ENCODE measurements at regions of chr3 and their contacts with region 1.

Region 1: DNA sequence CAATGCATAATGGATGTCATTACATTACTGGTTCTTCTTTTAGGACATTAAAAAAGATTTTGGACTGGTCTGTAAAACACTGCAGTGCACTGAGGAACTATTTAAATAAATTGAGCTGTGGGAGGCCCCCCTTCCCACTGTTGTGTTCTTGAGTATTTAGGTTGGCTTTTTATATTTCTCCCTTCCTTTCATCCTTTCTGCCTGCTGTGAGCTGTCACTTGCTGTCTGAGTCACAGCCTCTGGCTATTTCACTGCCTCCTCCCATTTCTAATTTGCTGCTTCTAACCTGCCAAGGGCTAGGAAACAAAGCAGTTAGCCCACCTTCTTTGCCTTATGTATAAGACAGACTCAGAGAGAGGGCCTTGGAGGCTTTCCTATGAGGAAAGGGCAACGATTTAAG is 89.0 kb upstream of the FNDC3B start:
- DNase-seq: peak; percentile 35
- ATAC-seq: peak; percentile 42
- H3K4me3 ChIP-seq: no peak overlapping the region
- H3K27ac ChIP-seq: peak overlapping the region; percentile 33
- H3K4me1 ChIP-seq: peaks cover 72% of the 10 kb centered on the region
- H3K27me3 ChIP-seq: no peaks in the 10 kb centered on the region
- CTCF ChIP-seq: no peak
- EP300 ChIP-seq: no peak
- POLR2A ChIP-seq: no peak
- RAD21 ChIP-seq: no peak

Region 2: GRCh38 chr3:171846597-171846996 is 103.8 kb before region 1 on chr3:
- CTCF ChIA-PET with region 1: no interaction called
- POLR2A ChIA-PET with region 1: interaction called, 12 read pairs
- in situ Hi-C with region 1: no loop called
- intact Hi-C with region 1: loop called (anchors 10 kb)
- DNase-seq: no peak
- ATAC-seq: peak; percentile 34; the same call in 2 of the 3 replicates
- H3K4me3 ChIP-seq: no peak overlapping the region
- H3K27ac ChIP-seq: peak overlapping the region; percentile 100
- H3K4me1 ChIP-seq: peaks cover 88% of the 10 kb centered on the region
- H3K27me3 ChIP-seq: no peaks in the 10 kb centered on the region
- CTCF ChIP-seq: no peak
- EP300 ChIP-seq: 0 out of 4 replicates have a peak, but pooled peaks of 1 of the 2 experiments have one; percentile 6
- POLR2A ChIP-seq: no peak
- RAD21 ChIP-seq: no peak

Region 3: DNA sequence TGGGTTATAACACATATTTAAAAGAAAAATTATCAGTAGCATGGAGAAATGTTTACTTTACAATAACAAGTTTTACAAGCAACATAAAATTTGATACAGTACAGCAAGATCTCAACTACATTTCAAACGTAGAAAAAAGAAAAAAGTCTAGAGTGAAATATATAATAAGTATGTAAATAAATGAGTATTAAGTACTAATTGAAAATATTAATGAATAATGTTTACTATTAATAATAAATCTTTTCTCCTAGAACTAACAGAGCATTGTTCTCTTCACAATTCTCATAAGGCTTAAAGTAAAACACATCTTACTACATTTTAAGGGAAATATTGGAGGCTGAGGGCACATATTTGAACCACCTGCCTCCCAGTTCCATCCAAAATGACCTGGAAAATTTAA is 35.1 kb before region 1 on chr3:
- CTCF ChIA-PET with region 1: no interaction called
- POLR2A ChIA-PET with region 1: no interaction called
- in situ Hi-C with region 1: no loop called
- intact Hi-C with region 1: no loop called
- DNase-seq: no peak
- ATAC-seq: no peak
- H3K4me3 ChIP-seq: no peak overlapping the region
- H3K27ac ChIP-seq: no peak overlapping the region
- H3K4me1 ChIP-seq: peaks cover 8% of the 10 kb centered on the region; the same call in 1 of the 2 replicates
- H3K27me3 ChIP-seq: no peaks in the 10 kb centered on the region; a peak in 1 of 5 replicates
- CTCF ChIP-seq: no peak
- EP300 ChIP-seq: no peak
- POLR2A ChIP-seq: no peak
- RAD21 ChIP-seq: no peak

Region 4: DNA sequence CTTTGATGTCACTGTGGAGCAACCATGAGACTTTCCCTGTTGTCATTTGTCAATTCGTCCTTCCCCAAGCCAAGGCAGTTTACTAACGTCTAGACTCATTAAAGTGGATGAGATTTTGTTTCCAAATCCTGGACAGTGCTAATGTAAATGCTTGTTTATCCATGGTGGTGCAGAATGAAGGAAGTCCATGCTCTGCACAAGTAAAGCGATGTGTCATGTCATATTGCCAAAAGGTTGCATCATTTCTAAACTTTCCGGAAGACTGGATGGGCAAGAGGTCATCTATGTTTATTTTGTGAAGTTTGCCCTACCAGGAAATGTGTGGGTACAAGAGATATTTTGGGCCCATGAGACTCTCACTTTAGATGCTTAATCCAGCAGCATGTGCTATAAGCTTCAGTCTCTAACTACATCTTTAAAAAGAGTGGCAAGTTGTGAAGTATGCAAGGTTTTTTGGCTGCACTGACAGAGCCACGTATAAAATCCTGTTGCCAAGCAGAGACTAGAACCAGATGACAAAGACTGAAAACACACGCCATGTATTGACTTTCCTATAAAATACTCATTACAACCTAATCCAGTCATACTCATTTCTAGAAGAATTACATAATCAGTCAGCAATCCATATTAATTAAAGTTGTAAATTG is 16.9 kb after region 1 on chr3:
- CTCF ChIA-PET with region 1: no interaction called
- POLR2A ChIA-PET with region 1: interaction called, 18 read pairs
- in situ Hi-C with region 1: no loop called
- intact Hi-C with region 1: no loop called
- DNase-seq: peak; percentile 96
- ATAC-seq: peak; percentile 89
- H3K4me3 ChIP-seq: no peak overlapping the region; a peak in 1 of 6 replicates
- H3K27ac ChIP-seq: peak overlapping the region; percentile 90
- H3K4me1 ChIP-seq: peaks cover 69% of the 10 kb centered on the region
- H3K27me3 ChIP-seq: no peaks in the 10 kb centered on the region
- CTCF ChIP-seq: no peak
- EP300 ChIP-seq: peak in 1 of 2 experiments; percentile 99; a peak in 3 of 4 replicates
- POLR2A ChIP-seq: 0 out of 4 replicates have a peak, but pooled peaks of 1 of the 2 experiments have one; percentile 55
- RAD21 ChIP-seq: no peak